ENCODE measurements at regions of chr9 and their contacts with region 1.

Region 1: GRCh38 chr9:74309654-74310053 is 187.5 kb upstream of the RORB start:
- DNase-seq: no peak
- ATAC-seq: no peak

Region 2: GRCh38 chr9:74570879-74571512 is 261.3 kb after region 1 on chr9:
- intact Hi-C with region 1: loop called in 1 of 2 experiments (anchors 5 kb)
- DNase-seq: no peak
- ATAC-seq: no peak

Region 3: DNA sequence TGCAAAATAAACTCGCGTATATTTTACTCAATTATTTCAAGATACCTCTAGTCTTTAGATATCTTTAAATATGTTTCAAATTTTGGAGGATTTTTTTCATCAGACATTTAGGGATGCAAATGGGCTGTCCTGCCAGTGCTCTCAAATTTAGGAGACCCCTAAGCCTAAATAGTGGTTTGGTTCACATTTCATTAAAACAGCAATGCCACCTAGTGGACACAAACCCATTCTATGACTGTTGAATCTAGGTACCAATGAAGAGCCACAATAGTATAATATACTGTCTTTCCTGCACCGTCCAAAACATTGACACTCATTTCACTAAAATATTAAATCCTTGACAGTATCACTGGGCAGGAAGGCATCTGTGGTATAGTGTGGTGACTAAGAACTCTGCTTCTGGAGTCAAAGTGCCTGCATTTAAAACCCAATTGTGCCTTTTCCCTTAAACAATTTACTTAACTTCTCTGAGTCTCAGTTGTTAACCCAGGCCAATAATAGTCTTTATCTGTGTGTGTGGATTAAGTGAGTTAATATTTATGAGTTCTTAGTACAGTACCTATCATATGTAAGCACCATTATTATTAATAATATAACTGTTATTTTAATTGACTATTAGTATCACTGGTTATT is 335.5 kb after region 1 on chr9:
- intact Hi-C with region 1: loop called in 1 of 2 experiments (anchors 10 kb)
- DNase-seq: no peak
- ATAC-seq: no peak